ENCODE measurements at regions of chr2 and their contacts with region 1.

Region 1: GRCh38 chr2:147843864-147844696 is 749 bp upstream of the ACVR2A start:
- DNase-seq: peak; percentile 31
- H3K4me3 ChIP-seq: peak overlapping the region; percentile 84
- H3K27me3 ChIP-seq: no peaks in the 10 kb centered on the region
- CTCF ChIP-seq: peak; percentile 36

Region 2: GRCh38 chr2:147863835-147864234 is 19.8 kb after region 1 on chr2:
- CTCF ChIA-PET with region 1: no interaction called
- POLR2A ChIA-PET with region 1: no interaction called
- DNase-seq: no peak
- H3K4me3 ChIP-seq: no peak overlapping the region
- H3K27me3 ChIP-seq: no peaks in the 10 kb centered on the region
- CTCF ChIP-seq: no peak

Region 3: GRCh38 chr2:148020111-148021058 is 176.3 kb after region 1 on chr2 and contains the start of gene ORC4:
- CTCF ChIA-PET with region 1: no interaction called
- POLR2A ChIA-PET with region 1: interaction called, 17 read pairs
- DNase-seq: peak; percentile 97
- H3K4me3 ChIP-seq: peak within 1 kb of the TSS; percentile 84
- H3K27me3 ChIP-seq: no peaks in the 10 kb centered on the region
- CTCF ChIP-seq: peak; percentile 64
- polyA plus RNA-seq, gene ORC4: 12.7 and 34.8 TPM in 2 replicates

Region 4: GRCh38 chr2:148122788-148123187 is 278.7 kb after region 1 on chr2:
- CTCF ChIA-PET with region 1: no interaction called
- POLR2A ChIA-PET with region 1: no interaction called
- DNase-seq: no peak
- H3K4me3 ChIP-seq: no peak overlapping the region
- H3K27me3 ChIP-seq: no peaks in the 10 kb centered on the region
- CTCF ChIP-seq: no peak